ENCODE measurements at regions of chr20 and their contacts with region 1.

Region 1: DNA sequence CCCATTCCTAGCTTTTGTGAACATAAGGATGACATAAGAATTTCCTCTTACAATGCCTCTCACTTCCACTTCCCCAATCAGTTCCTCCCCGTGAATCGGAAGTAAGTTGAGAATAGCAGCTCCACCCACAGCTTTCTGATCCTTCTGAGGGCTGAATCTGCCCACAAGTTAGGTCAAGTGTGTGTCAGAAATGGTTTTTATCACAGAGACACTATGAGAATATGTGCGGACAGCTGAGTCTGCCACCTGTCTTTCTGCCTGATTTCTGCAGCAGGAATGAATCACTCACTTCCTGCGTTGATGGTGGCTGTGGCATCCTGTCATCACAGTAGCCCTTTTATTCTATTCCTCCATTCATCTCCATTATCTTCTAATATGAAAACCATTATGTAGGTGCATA is 70.2 kb downstream of the RIN2 start:
- DNase-seq: peak; percentile 97
- ATAC-seq: peak; percentile 88
- H3K4me3 ChIP-seq: no peak overlapping the region
- H3K27ac ChIP-seq: peak overlapping the region; percentile 95
- H3K4me1 ChIP-seq: peaks cover 45% of the 10 kb centered on the region
- H3K27me3 ChIP-seq: no peaks in the 10 kb centered on the region
- CTCF ChIP-seq: peak; percentile 67

Region 2: GRCh38 chr20:19620446-19620845 is 207.8 kb before region 1 on chr20:
- CTCF ChIA-PET with region 1: no interaction called
- POLR2A ChIA-PET with region 1: no interaction called
- intact Hi-C with region 1: no loop called
- DNase-seq: peak; percentile 13
- ATAC-seq: no peak
- H3K4me3 ChIP-seq: no peak overlapping the region
- H3K27ac ChIP-seq: no peak overlapping the region
- H3K4me1 ChIP-seq: 0 out of 2 replicates have a peak, but pooled peaks cover 6% of the 10 kb centered on the region
- H3K27me3 ChIP-seq: peaks cover 30% of the 10 kb centered on the region
- CTCF ChIP-seq: no peak

Region 3: DNA sequence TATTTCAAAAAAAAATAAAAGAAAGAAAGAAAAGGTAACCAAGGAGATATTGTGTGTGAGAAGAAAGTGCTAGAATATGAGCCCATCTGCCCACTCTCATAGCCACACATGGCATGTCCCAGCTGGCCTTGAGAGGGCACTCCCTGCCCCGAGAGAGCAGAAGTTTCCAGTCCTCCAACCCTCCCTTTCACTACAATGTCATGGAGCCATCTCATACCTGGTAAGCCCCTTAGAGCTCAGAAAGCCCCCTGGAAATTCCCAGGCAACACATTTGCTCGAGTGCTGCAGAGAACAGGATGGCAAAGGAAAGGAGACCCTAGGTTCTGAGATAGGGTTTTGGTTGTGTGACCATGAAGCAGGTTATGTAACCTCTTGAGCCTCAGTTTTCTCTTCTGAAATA is 146.0 kb before region 1 on chr20:
- CTCF ChIA-PET with region 1: no interaction called
- POLR2A ChIA-PET with region 1: no interaction called
- intact Hi-C with region 1: no loop called
- DNase-seq: no peak
- ATAC-seq: no peak
- H3K4me3 ChIP-seq: no peak overlapping the region
- H3K27ac ChIP-seq: no peak overlapping the region
- H3K4me1 ChIP-seq: no peaks in the 10 kb centered on the region
- H3K27me3 ChIP-seq: no peaks in the 10 kb centered on the region
- CTCF ChIP-seq: no peak

Region 4: DNA sequence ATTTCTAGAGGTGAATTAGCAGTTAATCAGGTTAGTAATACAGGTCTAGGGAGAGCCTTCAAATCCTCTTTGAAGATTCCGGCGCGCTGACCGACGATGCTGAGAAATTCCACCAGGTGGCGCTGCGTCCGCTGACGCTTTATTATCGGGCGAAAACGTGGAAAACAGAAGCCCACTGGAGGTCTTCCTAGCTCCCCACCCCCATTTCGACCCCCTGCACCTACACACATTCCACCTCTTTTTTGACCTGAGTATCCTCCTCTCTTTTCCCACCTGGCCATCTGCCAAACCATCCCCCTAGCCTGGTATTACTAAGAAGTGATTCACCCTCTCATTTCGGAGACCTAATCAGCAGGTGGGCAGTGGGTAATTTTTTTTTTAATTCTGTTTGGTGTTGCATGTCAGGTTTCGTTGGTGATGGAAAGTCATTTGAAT is 135.5 kb before region 1 on chr20:
- CTCF ChIA-PET with region 1: no interaction called
- POLR2A ChIA-PET with region 1: no interaction called
- intact Hi-C with region 1: loop called (anchors 1 kb)
- DNase-seq: peak; percentile 82
- ATAC-seq: peak; percentile 53
- H3K4me3 ChIP-seq: peak overlapping the region; percentile 37
- H3K27ac ChIP-seq: peak overlapping the region; percentile 86
- H3K4me1 ChIP-seq: peaks cover 46% of the 10 kb centered on the region
- H3K27me3 ChIP-seq: no peaks in the 10 kb centered on the region
- CTCF ChIP-seq: peak; percentile 98

Region 5: DNA sequence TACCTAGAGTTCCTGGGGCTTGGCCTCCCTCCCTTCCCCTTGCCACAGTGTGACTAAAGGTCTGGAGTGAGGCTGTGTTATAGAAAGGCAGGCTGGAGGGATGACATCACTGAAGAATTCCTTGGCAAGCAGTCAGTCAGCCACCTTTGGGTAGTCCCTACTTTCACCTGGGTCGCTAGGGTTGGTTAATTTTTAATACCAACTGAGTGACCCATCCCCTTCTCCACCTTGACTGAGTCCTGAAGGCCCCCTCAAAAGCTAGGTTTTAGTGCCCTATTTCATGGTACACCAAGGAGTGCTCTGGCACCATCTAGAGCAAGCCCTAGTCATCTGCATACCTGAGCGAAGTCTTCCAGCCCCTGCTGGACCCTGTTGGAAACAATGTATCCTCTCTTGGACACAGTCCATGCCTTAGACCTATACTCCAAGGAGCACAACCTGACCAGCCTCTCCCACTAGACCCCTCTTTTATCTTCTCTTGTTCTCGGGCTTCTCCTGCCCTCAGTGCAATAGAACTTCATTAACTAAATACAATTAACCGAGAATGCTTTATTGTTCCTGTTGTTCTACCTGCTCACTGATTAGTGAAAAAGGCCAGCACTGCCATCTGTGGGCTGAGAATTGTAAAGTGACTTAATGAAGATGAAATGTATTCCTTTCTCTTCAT is 25.6 kb before region 1 on chr20:
- CTCF ChIA-PET with region 1: no interaction called
- POLR2A ChIA-PET with region 1: no interaction called
- intact Hi-C with region 1: loop called (anchors 1 kb)
- DNase-seq: peak; percentile 87
- ATAC-seq: peak; percentile 88
- H3K4me3 ChIP-seq: no peak overlapping the region
- H3K27ac ChIP-seq: peak overlapping the region; percentile 52
- H3K4me1 ChIP-seq: peaks cover 28% of the 10 kb centered on the region
- H3K27me3 ChIP-seq: no peaks in the 10 kb centered on the region
- CTCF ChIP-seq: peak; percentile 84

Region 6: DNA sequence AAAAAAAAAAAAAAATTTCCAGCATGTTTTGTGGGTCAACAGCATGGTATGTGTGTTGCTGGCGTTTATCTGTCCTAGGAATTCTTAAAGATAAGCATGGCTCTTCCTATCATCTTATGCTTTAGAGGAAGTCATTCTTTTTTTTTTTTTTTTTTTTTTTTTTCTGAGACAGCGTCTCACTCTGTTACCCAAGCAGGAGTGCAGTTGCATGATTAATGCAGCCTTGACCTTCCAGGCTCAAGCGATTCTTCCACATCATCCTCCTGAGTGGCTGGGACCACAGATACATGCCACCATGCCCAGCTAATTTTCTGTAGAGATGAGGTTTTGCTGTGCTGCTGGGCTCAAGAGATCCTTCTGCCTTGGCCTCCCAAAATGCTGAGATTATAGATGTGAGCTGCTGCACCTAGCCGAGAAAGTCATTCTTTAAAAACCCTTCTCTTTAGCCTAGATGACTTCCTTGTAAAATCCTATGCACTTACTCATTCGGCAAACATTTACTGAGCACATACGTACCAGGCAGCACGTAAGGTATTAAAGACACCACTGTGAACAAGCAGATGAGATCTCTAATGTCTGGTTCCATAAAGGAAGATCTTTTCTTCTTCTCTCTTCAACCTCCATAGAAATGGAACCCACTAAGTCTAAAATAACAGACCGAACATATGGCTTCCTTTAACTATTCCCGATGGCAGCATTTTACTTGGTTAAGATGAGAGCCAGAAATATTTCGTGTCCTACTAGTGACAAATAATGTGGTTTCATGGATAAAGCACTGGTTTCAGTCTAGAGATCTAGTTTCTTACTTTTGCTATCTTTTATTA is 52.2 kb after region 1 on chr20:
- CTCF ChIA-PET with region 1: interaction called, 9 read pairs
- POLR2A ChIA-PET with region 1: no interaction called
- intact Hi-C with region 1: loop called (anchors 1 kb)
- DNase-seq: peak; percentile 95
- ATAC-seq: peak; percentile 86
- H3K4me3 ChIP-seq: peak overlapping the region; percentile 29; the same call in 1 of the 2 replicates
- H3K27ac ChIP-seq: peak overlapping the region; percentile 96
- H3K4me1 ChIP-seq: peaks cover 50% of the 10 kb centered on the region
- H3K27me3 ChIP-seq: no peaks in the 10 kb centered on the region
- CTCF ChIP-seq: no peak

Region 7: GRCh38 chr20:19889011-19889953 is 61.0 kb after region 1 on chr20:
- CTCF ChIA-PET with region 1: interaction called, 9 read pairs
- POLR2A ChIA-PET with region 1: interaction called, 5 read pairs
- intact Hi-C with region 1: loop called (anchors 1 kb)
- DNase-seq: peak; percentile 52
- ATAC-seq: peak; percentile 29
- H3K4me3 ChIP-seq: peak overlapping the region; percentile 60
- H3K27ac ChIP-seq: peak overlapping the region; percentile 91
- H3K4me1 ChIP-seq: peaks cover 66% of the 10 kb centered on the region
- H3K27me3 ChIP-seq: no peaks in the 10 kb centered on the region
- CTCF ChIP-seq: no peak

Region 8: GRCh38 chr20:19934792-19935491 is 106.7 kb after region 1 on chr20:
- CTCF ChIA-PET with region 1: no interaction called
- POLR2A ChIA-PET with region 1: no interaction called
- intact Hi-C with region 1: no loop called
- DNase-seq: peak; percentile 27
- ATAC-seq: peak; percentile 52; the same call in 1 of the 2 replicates
- H3K4me3 ChIP-seq: no peak overlapping the region
- H3K27ac ChIP-seq: peak overlapping the region; percentile 51
- H3K4me1 ChIP-seq: peaks cover 22% of the 10 kb centered on the region
- H3K27me3 ChIP-seq: no peaks in the 10 kb centered on the region
- CTCF ChIP-seq: no peak

Region 9: GRCh38 chr20:20010639-20011500 is 182.6 kb after region 1 on chr20:
- CTCF ChIA-PET with region 1: no interaction called
- POLR2A ChIA-PET with region 1: no interaction called
- intact Hi-C with region 1: loop called (anchors 5 kb)
- DNase-seq: peak; percentile 77
- ATAC-seq: peak; percentile 83
- H3K4me3 ChIP-seq: peak overlapping the region; percentile 45
- H3K27ac ChIP-seq: peak overlapping the region; percentile 58
- H3K4me1 ChIP-seq: peaks cover 26% of the 10 kb centered on the region
- H3K27me3 ChIP-seq: no peaks in the 10 kb centered on the region
- CTCF ChIP-seq: no peak

Measured in PC-3 (cell line).